H1 (cell line): ENCODE measurements at regions of chr20 and their contacts with region 1.

Region 1: DNA sequence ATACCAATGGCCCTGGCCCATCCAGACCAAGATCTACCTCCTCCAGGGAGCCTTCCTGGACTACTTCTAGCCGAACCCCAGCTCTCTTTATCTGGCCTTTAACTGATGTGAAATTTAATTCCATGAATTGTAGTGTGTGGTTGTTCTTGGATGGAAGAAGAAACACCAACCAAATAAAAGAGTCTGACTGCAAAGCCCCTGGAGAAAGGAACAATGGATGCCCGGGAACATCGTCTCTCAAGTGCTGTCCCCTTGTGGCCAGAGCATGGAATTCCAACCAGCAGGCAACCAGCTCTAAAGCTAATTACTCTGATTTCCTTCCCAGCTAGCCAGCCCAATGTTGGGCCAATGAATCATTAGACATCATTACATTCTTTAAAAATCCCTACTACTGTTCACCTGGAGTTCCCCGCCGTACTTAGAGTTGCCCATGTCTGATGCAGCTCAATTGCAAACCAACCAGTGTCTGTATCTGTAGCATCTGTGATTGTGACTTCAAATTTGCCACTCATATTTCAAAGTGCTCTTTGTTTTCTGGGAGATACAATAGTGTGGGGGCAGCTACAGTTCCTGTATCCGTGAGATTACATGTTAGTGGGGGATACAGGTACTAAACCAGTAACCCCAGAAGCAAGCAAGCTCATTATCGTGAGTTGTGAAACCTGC is 141.1 kb downstream of the ANKRD60 start:
- DNase-seq: peak in 1 of 2 experiments; percentile 67
- H3K4me3 ChIP-seq: no peak overlapping the region
- H3K27ac ChIP-seq: no peak overlapping the region
- H3K4me1 ChIP-seq: peaks cover 0 to 3% (median 0%) of the 10 kb centered on the region in 4 experiments; a peak in 1 of 7 replicates
- H3K27me3 ChIP-seq: no peaks in the 10 kb centered on the region; a peak in 1 of 7 replicates
- CTCF ChIP-seq: peak; percentile 90 to 97 (median 90)
- EP300 ChIP-seq: no peak
- POLR2A ChIP-seq: no peak
- RAD21 ChIP-seq: peak; percentile 89 to 92

Region 2: DNA sequence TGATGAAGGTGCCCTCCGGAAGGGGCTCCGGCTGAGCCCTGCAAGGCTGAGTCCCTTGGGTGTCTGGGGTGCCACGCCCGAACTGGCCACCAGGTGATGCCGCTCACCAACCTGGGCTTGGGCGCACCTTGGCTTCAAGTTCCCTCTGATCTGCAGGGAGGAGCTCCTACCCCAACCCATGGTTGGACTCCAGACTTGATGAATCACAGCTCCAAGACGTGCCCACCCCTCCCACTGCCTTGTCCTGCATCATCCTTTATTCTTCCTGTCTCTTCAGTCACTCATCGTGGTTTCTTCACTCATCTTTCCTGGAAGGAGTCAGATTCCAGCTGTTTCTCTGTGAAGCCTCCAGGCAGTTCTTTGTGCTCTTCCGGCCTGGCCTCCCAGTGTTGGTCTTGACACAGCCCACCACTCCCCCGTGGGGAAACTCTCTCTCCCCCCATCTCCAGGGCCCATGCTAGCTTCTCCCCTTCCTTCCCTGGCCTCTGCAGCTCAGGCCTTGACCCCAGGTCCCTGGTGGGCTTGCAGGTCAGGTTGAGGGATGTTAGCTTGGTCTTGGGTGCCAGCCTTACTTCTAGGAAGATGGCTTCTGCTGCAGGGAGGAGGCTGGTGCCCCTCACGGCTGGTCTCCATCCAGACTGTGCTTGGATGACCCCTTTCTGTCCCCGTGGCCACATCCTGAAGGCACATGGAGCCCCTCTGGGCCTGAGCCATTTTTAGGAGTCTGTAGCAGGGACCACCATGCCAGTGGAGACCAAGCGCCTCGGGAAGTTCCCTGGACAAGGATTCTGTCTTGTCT is 464.5 kb before region 1 on chr20:
- CTCF ChIA-PET with region 1: interaction called, 29 read pairs
- POLR2A ChIA-PET with region 1: no interaction called
- DNase-seq: peak; percentile 38 to 90
- H3K4me3 ChIP-seq: no peak overlapping the region
- H3K27ac ChIP-seq: no peak overlapping the region
- H3K4me1 ChIP-seq: no peaks in the 10 kb centered on the region
- H3K27me3 ChIP-seq: no peaks in the 10 kb centered on the region
- CTCF ChIP-seq: peak; percentile 93 to 98 (median 95)
- EP300 ChIP-seq: no peak
- POLR2A ChIP-seq: no peak
- RAD21 ChIP-seq: peak; percentile 96 to 97

Region 3: GRCh38 chr20:58012731-58013510 is 74.4 kb before region 1 on chr20:
- CTCF ChIA-PET with region 1: interaction called, 12 read pairs
- POLR2A ChIA-PET with region 1: interaction called, 3 read pairs
- DNase-seq: no peak
- H3K4me3 ChIP-seq: no peak overlapping the region
- H3K27ac ChIP-seq: no peak overlapping the region
- H3K4me1 ChIP-seq: no peaks in the 10 kb centered on the region; a peak in 1 of 7 replicates
- H3K27me3 ChIP-seq: no peaks in the 10 kb centered on the region
- CTCF ChIP-seq: no peak
- EP300 ChIP-seq: no peak
- POLR2A ChIP-seq: no peak
- RAD21 ChIP-seq: no peak

Region 4: GRCh38 chr20:58102744-58103505 is 15.6 kb after region 1 on chr20:
- CTCF ChIA-PET with region 1: interaction called, 27 read pairs
- POLR2A ChIA-PET with region 1: no interaction called
- DNase-seq: no peak
- H3K4me3 ChIP-seq: no peak overlapping the region
- H3K27ac ChIP-seq: no peak overlapping the region
- H3K4me1 ChIP-seq: no peaks in the 10 kb centered on the region
- H3K27me3 ChIP-seq: no peaks in the 10 kb centered on the region
- CTCF ChIP-seq: no peak
- EP300 ChIP-seq: no peak
- POLR2A ChIP-seq: no peak
- RAD21 ChIP-seq: no peak

Region 5: GRCh38 chr20:58131551-58132142 is 44.3 kb after region 1 on chr20:
- CTCF ChIA-PET with region 1: interaction called, 12 read pairs
- POLR2A ChIA-PET with region 1: no interaction called
- DNase-seq: peak in 1 of 2 experiments; percentile 30
- H3K4me3 ChIP-seq: peak overlapping the region in 1 of 4 experiments; percentile 13; a peak in 1 of 8 replicates
- H3K27ac ChIP-seq: no peak overlapping the region
- H3K4me1 ChIP-seq: peaks cover 6 to 9% (median 8%) of the 10 kb centered on the region in 4 experiments; a peak in 6 of 7 replicates
- H3K27me3 ChIP-seq: no peaks in the 10 kb centered on the region; a peak in 1 of 7 replicates
- CTCF ChIP-seq: no peak
- EP300 ChIP-seq: no peak
- POLR2A ChIP-seq: no peak
- RAD21 ChIP-seq: no peak